ENCODE measurements at regions of chr6 and their contacts with region 1.

Region 1: DNA sequence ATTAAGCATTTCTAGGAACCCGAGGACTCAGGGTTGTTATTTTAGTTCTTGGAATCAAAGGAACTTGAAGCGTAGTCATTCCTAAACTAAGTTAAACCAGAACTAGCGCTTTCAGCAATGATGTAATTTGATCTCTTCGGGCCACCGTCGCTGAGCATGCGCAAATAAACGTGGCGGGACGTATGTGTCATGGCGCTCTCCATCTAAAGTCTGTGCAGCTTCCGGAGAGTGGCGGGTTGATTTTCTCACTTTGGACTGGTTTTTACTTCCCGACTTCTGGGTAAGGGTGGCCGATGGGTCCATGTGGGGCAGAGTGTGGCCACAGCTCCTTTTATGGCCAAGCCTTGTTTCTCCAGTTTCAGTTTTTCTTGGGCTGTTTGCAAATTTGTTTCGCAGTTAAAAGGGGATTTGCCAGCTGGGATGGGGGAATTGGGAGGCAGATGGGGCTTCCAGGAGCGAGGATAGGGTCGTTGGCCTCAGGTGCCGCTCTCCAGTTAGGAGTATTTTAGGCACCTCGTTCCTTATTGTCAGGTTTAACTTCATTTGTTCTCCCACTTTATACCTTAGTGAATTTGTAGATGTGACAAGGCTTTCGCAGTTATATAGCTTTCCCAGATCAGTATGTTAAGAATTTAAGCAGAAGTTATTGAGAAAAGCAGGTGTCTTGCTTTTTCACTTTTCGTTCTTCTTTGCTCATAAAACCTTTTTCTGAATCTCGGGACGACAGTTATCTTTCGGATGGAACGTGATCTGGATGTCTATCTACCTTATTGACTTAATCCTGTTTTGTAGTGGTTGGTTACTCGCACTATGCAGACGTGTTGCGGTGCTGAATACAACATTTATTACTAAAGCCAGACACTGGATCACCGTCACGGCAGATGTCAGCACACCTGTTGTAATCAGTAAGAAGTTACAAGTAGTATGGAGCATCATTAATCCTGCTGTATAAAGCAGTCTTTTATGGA is at the start of gene CDKAL1:
- DNase-seq: peak; percentile 89 to 94 (median 94)
- ATAC-seq: peak; percentile 92 to 93
- H3K4me3 ChIP-seq: peak within 1 kb of the TSS; percentile 95
- H3K27ac ChIP-seq: peak within 1 kb of the TSS; percentile 85
- H3K4me1 ChIP-seq: no peaks in the 10 kb centered on the region
- H3K27me3 ChIP-seq: no peaks in the 10 kb centered on the region
- total RNA-seq, gene CDKAL1: 9.7 to 11.5 (median 11.0) TPM

Region 2: DNA sequence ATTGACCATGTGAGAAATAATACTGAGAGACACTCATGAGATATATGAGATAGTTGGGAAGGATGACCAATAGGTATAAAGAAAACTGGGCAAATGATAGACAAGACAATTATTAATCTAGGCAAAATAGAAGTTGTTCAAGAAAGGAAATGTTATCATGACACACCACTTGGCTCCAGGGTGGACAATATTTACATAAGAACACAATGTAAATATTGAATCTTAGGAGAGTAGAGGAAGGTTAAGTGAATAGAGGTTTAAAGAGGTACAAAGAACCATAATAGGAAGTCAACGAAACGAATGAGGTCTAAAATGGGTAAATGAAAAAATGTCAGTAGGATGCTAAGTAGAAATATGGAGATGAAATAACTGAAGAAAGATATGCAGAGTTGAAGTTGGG is 448.8 kb before region 1 on chr6:
- intact Hi-C with region 1: loop called in 3 of 4 experiments (anchors 5 to 10 kb)
- DNase-seq: no peak
- ATAC-seq: no peak
- H3K4me3 ChIP-seq: no peak overlapping the region
- H3K27ac ChIP-seq: no peak overlapping the region
- H3K4me1 ChIP-seq: no peaks in the 10 kb centered on the region
- H3K27me3 ChIP-seq: no peaks in the 10 kb centered on the region

Region 3: GRCh38 chr6:20092071-20092566 is 442.5 kb before region 1 on chr6:
- intact Hi-C with region 1: loop called in 3 of 4 experiments (anchors 5 to 10 kb)
- DNase-seq: no peak
- ATAC-seq: no peak
- H3K4me3 ChIP-seq: no peak overlapping the region
- H3K27ac ChIP-seq: no peak overlapping the region
- H3K4me1 ChIP-seq: no peaks in the 10 kb centered on the region
- H3K27me3 ChIP-seq: no peaks in the 10 kb centered on the region

Region 4: GRCh38 chr6:20291764-20292580 is 242.6 kb before region 1 on chr6:
- intact Hi-C with region 1: loop called in 3 of 4 experiments (anchors 2 to 5 kb)
- DNase-seq: peak; percentile 71 to 85 (median 78)
- ATAC-seq: peak; percentile 89
- H3K4me3 ChIP-seq: no peak overlapping the region
- H3K27ac ChIP-seq: no peak overlapping the region
- H3K4me1 ChIP-seq: no peaks in the 10 kb centered on the region
- H3K27me3 ChIP-seq: no peaks in the 10 kb centered on the region

Region 5: GRCh38 chr6:20401205-20402091 is 133.1 kb before region 1 on chr6 and contains the start of gene E2F3:
- intact Hi-C with region 1: loop called in 2 of 4 experiments (anchors 2 to 5 kb)
- DNase-seq: peak; percentile 99 to 100 (median 100)
- ATAC-seq: peak; percentile 96 to 98
- H3K4me3 ChIP-seq: peak within 1 kb of the TSS; percentile 86
- H3K27ac ChIP-seq: peak within 1 kb of the TSS; percentile 78
- H3K4me1 ChIP-seq: no peaks in the 10 kb centered on the region
- H3K27me3 ChIP-seq: no peaks in the 10 kb centered on the region
- total RNA-seq, gene E2F3: 6.1 to 10.1 (median 7.8) TPM

Region 6: DNA sequence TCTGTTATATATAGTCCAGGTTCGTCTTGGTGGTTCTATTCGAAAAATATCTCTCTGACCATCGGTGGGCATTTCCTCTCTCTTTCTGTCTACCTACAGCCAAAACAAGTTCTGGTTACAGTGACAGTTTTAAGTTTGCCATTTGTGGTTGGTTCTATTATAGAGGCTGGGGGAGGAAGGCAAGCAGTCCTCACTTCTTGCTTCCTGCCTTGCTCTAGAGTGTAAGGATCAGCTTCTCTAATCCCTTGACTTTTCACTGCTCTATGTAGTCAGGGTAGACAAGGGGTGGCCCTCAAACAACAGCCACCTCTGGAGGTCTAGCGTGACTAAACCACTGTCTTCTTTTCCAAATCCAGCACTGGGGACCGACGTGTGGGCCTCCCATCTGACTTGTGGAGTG is 116.8 kb before region 1 on chr6:
- intact Hi-C with region 1: loop called in 1 of 4 experiments (anchors 10 kb)
- DNase-seq: no peak
- ATAC-seq: no peak
- H3K4me3 ChIP-seq: no peak overlapping the region
- H3K27ac ChIP-seq: no peak overlapping the region
- H3K4me1 ChIP-seq: peaks cover 5% of the 10 kb centered on the region
- H3K27me3 ChIP-seq: no peaks in the 10 kb centered on the region

Region 7: GRCh38 chr6:20978151-20978614 is 443.6 kb after region 1 on chr6:
- intact Hi-C with region 1: no loop called
- DNase-seq: no peak
- ATAC-seq: no peak
- H3K4me3 ChIP-seq: no peak overlapping the region
- H3K27ac ChIP-seq: no peak overlapping the region
- H3K4me1 ChIP-seq: no peaks in the 10 kb centered on the region
- H3K27me3 ChIP-seq: no peaks in the 10 kb centered on the region